ENCODE measurements at regions of chr9 and their contacts with region 1.

Region 1: GRCh38 chr9:38208206-38208901 is 139.3 kb upstream of the SHB start:
- DNase-seq: no peak
- H3K4me3 ChIP-seq: no peak overlapping the region
- H3K27ac ChIP-seq: no peak overlapping the region
- H3K27me3 ChIP-seq: peaks cover 0 to 3% (median 0%) of the 10 kb centered on the region in 45 donors
- CTCF ChIP-seq: no peak

Region 2: DNA sequence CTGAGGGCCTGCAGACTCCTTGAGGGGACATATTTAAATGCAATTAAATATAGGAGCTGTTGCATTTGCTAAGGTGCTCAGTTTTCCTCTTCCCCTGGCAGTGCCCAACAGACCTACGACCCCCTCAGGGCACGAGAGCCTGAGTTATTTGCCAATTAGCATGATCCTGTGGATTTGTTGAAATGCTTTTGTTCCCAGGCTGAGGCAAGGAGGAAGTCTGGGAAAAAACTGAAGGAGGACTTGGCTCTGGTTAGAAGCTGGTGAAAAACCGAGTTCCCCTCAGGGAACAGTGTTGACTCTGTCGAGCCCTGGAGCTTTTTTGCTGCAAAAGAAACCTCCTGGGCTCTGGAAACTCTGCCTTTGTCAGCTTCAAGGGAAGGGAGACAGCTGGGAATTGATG is 35.8 kb before region 1 on chr9:
- intact Hi-C with region 1: no loop called
- DNase-seq: no peak
- H3K4me3 ChIP-seq: no peak overlapping the region
- H3K27ac ChIP-seq: no peak overlapping the region
- H3K27me3 ChIP-seq: peaks cover 0 to 11% (median 0%) of the 10 kb centered on the region in 45 donors
- CTCF ChIP-seq: no peak

Region 3: GRCh38 chr9:38257626-38258215 is 49.4 kb after region 1 on chr9:
- intact Hi-C with region 1: loop called in 1 of 2 experiments (anchors 5 kb)
- DNase-seq: no peak
- H3K4me3 ChIP-seq: no peak overlapping the region
- H3K27ac ChIP-seq: no peak overlapping the region
- H3K27me3 ChIP-seq: peaks cover 0 to 4% (median 0%) of the 10 kb centered on the region in 45 donors
- CTCF ChIP-seq: no peak

Region 4: GRCh38 chr9:38318759-38319495 is 110.6 kb after region 1 on chr9:
- intact Hi-C with region 1: loop called in 1 of 2 experiments (anchors 10 kb)
- DNase-seq: no peak
- H3K4me3 ChIP-seq: no peak overlapping the region
- H3K27ac ChIP-seq: no peak overlapping the region
- H3K27me3 ChIP-seq: peaks cover 0 to 5% (median 0%) of the 10 kb centered on the region in 45 donors
- CTCF ChIP-seq: no peak

Measured in dorsolateral prefrontal cortex (tissue), 120 donors.